Activated naive CD4-positive, alpha-beta T cell treated with anti-CD3 and anti-CD28 coated beads for 36 hours (primary cell): ENCODE measurements at regions of chr14 and their contacts with region 1.

Region 1: GRCh38 chr14:97458661-97459579 is 661.7 kb downstream of the VRK1 start:
- DNase-seq: peak; percentile 91
- H3K4me3 Mint-ChIP-seq: peak overlapping the region; percentile 96
- H3K27ac Mint-ChIP-seq: peak overlapping the region; percentile 100
- H3K4me1 Mint-ChIP-seq: peaks cover 32% of the 10 kb centered on the region
- H3K27me3 Mint-ChIP-seq: no peaks in the 10 kb centered on the region

Region 2: GRCh38 chr14:97177015-97177414 is 281.9 kb before region 1 on chr14:
- CTCF ChIA-PET with region 1: no interaction called
- intact Hi-C with region 1: loop called (anchors 5 kb)
- DNase-seq: peak; percentile 59
- H3K4me3 Mint-ChIP-seq: no peak overlapping the region
- H3K27ac Mint-ChIP-seq: no peak overlapping the region
- H3K4me1 Mint-ChIP-seq: peaks cover 37% of the 10 kb centered on the region
- H3K27me3 Mint-ChIP-seq: no peaks in the 10 kb centered on the region

Region 3: GRCh38 chr14:97380539-97380941 is 78.4 kb before region 1 on chr14:
- CTCF ChIA-PET with region 1: no interaction called
- intact Hi-C with region 1: loop called (anchors 1 kb)
- DNase-seq: peak; percentile 86
- H3K4me3 Mint-ChIP-seq: no peak overlapping the region
- H3K27ac Mint-ChIP-seq: peak overlapping the region; percentile 16
- H3K4me1 Mint-ChIP-seq: peaks cover 39% of the 10 kb centered on the region
- H3K27me3 Mint-ChIP-seq: no peaks in the 10 kb centered on the region

Region 4: DNA sequence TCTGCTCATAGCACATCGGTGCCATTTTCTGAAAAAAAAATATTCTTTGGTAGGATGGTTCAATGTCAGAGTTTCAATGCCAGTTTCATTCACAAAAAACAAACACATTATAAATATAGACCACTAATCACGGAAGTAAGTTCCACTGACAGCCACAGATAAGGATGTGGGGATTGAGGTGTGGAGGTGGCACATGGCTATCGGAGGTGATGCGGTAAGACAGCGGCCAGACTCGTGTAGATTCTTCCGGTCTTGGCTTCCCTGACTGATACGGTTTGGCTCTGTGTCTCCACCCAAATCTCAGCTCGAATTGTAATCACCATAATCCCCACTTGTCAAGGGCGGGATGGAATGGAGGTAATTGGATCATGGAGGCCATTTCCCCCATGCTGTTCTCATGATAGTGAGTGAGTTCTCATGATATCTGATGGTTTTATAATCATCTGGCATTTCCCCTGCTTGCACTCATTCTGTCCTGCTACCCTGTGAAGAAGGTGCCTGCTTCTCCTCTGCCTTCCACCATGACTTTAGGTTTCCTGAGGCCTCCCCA is 31.7 kb after region 1 on chr14:
- CTCF ChIA-PET with region 1: no interaction called
- intact Hi-C with region 1: no loop called
- DNase-seq: no peak
- H3K4me3 Mint-ChIP-seq: no peak overlapping the region
- H3K27ac Mint-ChIP-seq: no peak overlapping the region
- H3K4me1 Mint-ChIP-seq: no peaks in the 10 kb centered on the region
- H3K27me3 Mint-ChIP-seq: no peaks in the 10 kb centered on the region

Region 5: DNA sequence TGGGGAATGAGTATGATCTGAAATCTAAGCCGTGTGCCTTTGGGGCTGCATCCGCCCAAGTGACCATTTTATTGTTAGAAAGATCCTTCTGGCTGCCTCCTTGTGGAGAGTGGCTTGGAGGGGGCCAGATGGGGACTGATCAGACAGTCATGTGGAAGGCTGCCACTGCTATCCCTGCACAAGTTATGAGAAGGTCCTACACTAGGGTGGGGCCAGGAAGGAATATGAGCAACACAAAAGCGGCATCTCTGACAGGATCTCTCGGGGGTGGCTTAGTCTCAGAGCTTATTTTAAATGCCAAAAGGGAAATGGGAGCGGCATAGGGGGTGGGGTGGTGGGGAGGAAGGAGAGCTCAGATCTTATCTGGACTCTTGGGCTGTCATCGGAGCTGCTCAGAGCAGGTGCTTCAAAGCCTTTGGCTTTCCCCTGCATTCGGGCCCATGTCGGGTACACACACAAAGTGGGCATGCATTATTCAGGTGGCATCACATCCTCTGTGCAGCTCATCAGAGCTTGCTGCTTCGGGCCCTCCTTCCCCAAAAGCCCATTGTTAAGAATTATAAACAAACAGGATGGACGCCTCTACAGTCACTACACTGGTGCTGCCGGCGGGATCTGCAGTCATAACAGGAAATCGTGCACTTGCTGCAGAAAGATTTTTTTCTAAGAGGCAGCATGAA is 143.7 kb after region 1 on chr14:
- CTCF ChIA-PET with region 1: no interaction called
- intact Hi-C with region 1: loop called (anchors 2 kb)
- DNase-seq: peak; percentile 80
- H3K4me3 Mint-ChIP-seq: no peak overlapping the region
- H3K27ac Mint-ChIP-seq: no peak overlapping the region
- H3K4me1 Mint-ChIP-seq: peaks cover 30% of the 10 kb centered on the region
- H3K27me3 Mint-ChIP-seq: no peaks in the 10 kb centered on the region

Region 6: GRCh38 chr14:97657609-97658008 is 198.7 kb after region 1 on chr14:
- CTCF ChIA-PET with region 1: no interaction called
- intact Hi-C with region 1: no loop called
- DNase-seq: no peak
- H3K4me3 Mint-ChIP-seq: no peak overlapping the region
- H3K27ac Mint-ChIP-seq: no peak overlapping the region
- H3K4me1 Mint-ChIP-seq: peaks cover 10% of the 10 kb centered on the region
- H3K27me3 Mint-ChIP-seq: no peaks in the 10 kb centered on the region

Region 7: DNA sequence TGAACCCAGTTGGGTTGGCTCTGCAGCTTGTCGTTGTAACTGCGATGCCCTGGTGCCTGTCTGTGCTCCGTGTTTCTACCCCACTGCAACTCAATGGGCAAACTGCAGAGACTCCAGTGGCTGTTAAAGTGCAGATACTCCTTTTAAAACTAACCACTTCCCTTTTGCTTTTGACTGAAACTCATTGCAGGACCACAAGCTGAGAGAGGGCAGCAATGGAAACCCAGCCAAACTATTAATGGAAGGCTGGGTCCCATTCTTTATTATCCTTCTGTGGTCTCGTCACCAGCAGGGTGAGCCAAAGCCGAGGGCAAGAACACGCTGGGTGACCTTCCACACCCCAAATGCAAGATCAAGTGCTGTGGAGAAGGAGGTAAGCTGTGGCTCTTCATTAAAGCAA is 248.7 kb after region 1 on chr14:
- CTCF ChIA-PET with region 1: no interaction called
- intact Hi-C with region 1: loop called (anchors 5 kb)
- DNase-seq: peak; percentile 47
- H3K4me3 Mint-ChIP-seq: no peak overlapping the region
- H3K27ac Mint-ChIP-seq: no peak overlapping the region
- H3K4me1 Mint-ChIP-seq: peaks cover 92% of the 10 kb centered on the region
- H3K27me3 Mint-ChIP-seq: no peaks in the 10 kb centered on the region

Region 8: GRCh38 chr14:99271951-99272631 is 1813.2 kb after region 1 on chr14 and contains the start of gene BCL11B:
- CTCF ChIA-PET with region 1: no interaction called
- intact Hi-C with region 1: loop called (anchors 2 kb)
- DNase-seq: peak; percentile 95
- H3K4me3 Mint-ChIP-seq: peak within 1 kb of the TSS; percentile 96
- H3K27ac Mint-ChIP-seq: peak within 1 kb of the TSS; percentile 97
- H3K4me1 Mint-ChIP-seq: peaks cover 23% of the 10 kb centered on the region
- H3K27me3 Mint-ChIP-seq: no peaks in the 10 kb centered on the region
- total RNA-seq, gene BCL11B: 71.7 to 71.9 TPM